ENCODE measurements at regions of chr1 and their contacts with region 1.

Region 1: GRCh38 chr1:182962554-182963115 is 9.7 kb upstream of the SHCBP1L start:
- DNase-seq: peak; percentile 6
- H3K4me3 Mint-ChIP-seq: no peak overlapping the region
- H3K27ac Mint-ChIP-seq: no peak overlapping the region
- H3K4me1 Mint-ChIP-seq: peaks cover 6% of the 10 kb centered on the region
- H3K27me3 Mint-ChIP-seq: peaks cover 7% of the 10 kb centered on the region

Region 2: GRCh38 chr1:183023601-183024316 is 61.1 kb after region 1 on chr1:
- intact Hi-C with region 1: loop called (anchors 2 kb)
- DNase-seq: peak; percentile 4
- H3K4me3 Mint-ChIP-seq: peak overlapping the region; percentile 83
- H3K27ac Mint-ChIP-seq: no peak overlapping the region
- H3K4me1 Mint-ChIP-seq: peaks cover 20% of the 10 kb centered on the region
- H3K27me3 Mint-ChIP-seq: peaks cover 78% of the 10 kb centered on the region

Region 3: GRCh38 chr1:183058851-183059502 is 96.3 kb after region 1 on chr1:
- intact Hi-C with region 1: no loop called
- DNase-seq: no peak
- H3K4me3 Mint-ChIP-seq: no peak overlapping the region
- H3K27ac Mint-ChIP-seq: no peak overlapping the region
- H3K4me1 Mint-ChIP-seq: no peaks in the 10 kb centered on the region
- H3K27me3 Mint-ChIP-seq: peaks cover 8% of the 10 kb centered on the region

Region 4: GRCh38 chr1:183227963-183228649 is 265.5 kb after region 1 on chr1:
- intact Hi-C with region 1: loop called (anchors 1 kb)
- DNase-seq: peak; percentile 16
- H3K4me3 Mint-ChIP-seq: no peak overlapping the region
- H3K27ac Mint-ChIP-seq: no peak overlapping the region
- H3K4me1 Mint-ChIP-seq: peaks cover 10% of the 10 kb centered on the region
- H3K27me3 Mint-ChIP-seq: no peaks in the 10 kb centered on the region

Region 5: GRCh38 chr1:183281553-183282091 is 319.0 kb after region 1 on chr1:
- intact Hi-C with region 1: loop called (anchors 1 kb)
- DNase-seq: peak; percentile 50
- H3K4me3 Mint-ChIP-seq: no peak overlapping the region
- H3K27ac Mint-ChIP-seq: no peak overlapping the region
- H3K4me1 Mint-ChIP-seq: peaks cover 6% of the 10 kb centered on the region
- H3K27me3 Mint-ChIP-seq: peaks cover 5% of the 10 kb centered on the region

Region 6: DNA sequence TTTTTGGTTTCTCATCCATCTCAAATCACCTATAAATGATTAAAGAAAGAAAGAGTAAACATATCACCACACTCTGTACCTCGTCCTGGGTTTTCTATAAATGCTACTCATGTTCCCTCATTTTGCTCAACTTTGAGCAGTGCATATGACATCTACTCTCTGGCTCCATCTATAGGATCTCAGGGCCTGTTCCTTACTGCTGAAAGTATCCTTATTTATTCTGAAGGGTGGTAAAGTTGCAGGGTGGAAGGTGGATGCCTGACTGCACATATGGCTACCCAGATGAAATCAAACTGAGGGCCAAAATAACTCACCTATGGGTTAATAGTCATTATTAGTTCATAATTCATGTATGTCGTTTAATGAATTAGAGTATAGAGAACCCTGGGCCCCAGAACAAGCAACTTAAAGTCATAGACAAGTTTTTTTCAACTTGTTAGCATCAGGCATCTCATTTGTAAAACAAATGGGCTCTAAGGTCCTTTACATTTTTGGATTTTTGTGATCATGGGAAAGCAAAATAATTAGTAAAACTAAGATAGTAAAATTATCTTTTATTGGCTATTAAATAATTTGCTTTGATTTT is 581.1 kb after region 1 on chr1:
- intact Hi-C with region 1: loop called (anchors 10 kb)
- DNase-seq: no peak
- H3K4me3 Mint-ChIP-seq: no peak overlapping the region
- H3K27ac Mint-ChIP-seq: no peak overlapping the region
- H3K4me1 Mint-ChIP-seq: peaks cover 22% of the 10 kb centered on the region
- H3K27me3 Mint-ChIP-seq: no peaks in the 10 kb centered on the region

Measured in activated T-helper 1 cell treated with anti-CD3 and anti-CD28 coated beads, Interleukin-12 subunit alpha, Interleukin-12 subunit beta, Interleukin-2, Interleukin-4 antibody, amounts not matched to agents 30 ng/mL and 10 ng/mL and 1 ng/mL, durations not matched to agents 14 hours and 24 hours and 36 hours (primary cell).